Psoas muscle (tissue), 8 donors: ENCODE measurements at regions of chr1 and their contacts with region 1.

Region 1: DNA sequence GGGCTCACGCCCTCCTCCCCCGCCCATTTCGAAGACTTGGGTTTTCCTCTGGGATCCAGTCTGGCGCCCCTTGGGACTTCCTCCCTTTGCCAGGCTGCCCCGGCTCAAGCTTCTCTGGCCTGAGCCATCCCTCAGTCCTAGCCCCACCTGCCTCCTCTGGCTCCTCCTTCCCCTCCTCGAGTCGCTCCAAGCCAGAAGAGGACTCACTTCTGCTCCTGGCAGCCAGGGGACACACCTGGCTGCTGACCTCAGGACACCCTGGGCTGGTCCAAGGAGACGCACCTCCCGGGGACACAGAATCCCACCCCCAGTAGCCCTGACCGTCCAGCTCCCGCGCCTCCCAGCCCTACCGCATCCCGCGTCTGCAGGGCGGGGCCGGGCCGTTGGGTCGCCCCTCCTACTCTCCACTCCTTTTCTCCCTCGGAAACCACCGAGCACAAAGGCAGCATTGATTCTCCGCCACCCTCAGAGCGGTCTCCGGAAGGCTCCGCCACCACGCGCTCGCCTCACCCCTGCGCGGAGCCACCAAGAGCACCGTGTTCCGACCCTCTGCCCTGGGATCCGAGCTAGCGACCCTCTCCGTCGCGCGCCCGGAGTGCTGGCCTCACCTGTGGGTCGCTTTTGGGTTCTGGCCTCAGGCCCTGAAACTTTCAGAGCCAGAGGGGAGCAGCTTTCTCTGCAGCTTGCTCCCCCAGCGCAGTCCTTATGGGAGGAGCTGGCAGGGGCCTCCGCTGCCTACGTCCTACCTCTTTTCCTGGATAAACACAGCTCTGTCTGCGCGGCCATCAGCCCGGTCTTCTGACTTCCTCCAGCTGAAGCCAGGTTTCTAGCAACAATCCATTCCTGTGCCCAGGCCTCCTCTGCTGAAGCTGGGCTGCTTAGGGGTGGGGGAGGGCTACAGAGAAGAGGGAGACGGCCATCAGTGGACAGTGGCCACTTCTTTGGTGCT is at the start of gene C2CD4D:
- DNase-seq: no peak
- ATAC-seq: no peak
- H3K4me3 ChIP-seq: peak within 1 kb of the TSS; percentile 70
- H3K27ac ChIP-seq: no peak within 1 kb of the TSS
- H3K4me1 ChIP-seq: no peaks in the 10 kb centered on the region
- H3K27me3 ChIP-seq: peaks cover 0 to 28% (median 17%) of the 10 kb centered on the region in 3 donors
- CTCF ChIP-seq: no peak
- total RNA-seq, gene C2CD4D: 0.47 TPM in 1 of 4 donors, not detected in the others

Region 2: DNA sequence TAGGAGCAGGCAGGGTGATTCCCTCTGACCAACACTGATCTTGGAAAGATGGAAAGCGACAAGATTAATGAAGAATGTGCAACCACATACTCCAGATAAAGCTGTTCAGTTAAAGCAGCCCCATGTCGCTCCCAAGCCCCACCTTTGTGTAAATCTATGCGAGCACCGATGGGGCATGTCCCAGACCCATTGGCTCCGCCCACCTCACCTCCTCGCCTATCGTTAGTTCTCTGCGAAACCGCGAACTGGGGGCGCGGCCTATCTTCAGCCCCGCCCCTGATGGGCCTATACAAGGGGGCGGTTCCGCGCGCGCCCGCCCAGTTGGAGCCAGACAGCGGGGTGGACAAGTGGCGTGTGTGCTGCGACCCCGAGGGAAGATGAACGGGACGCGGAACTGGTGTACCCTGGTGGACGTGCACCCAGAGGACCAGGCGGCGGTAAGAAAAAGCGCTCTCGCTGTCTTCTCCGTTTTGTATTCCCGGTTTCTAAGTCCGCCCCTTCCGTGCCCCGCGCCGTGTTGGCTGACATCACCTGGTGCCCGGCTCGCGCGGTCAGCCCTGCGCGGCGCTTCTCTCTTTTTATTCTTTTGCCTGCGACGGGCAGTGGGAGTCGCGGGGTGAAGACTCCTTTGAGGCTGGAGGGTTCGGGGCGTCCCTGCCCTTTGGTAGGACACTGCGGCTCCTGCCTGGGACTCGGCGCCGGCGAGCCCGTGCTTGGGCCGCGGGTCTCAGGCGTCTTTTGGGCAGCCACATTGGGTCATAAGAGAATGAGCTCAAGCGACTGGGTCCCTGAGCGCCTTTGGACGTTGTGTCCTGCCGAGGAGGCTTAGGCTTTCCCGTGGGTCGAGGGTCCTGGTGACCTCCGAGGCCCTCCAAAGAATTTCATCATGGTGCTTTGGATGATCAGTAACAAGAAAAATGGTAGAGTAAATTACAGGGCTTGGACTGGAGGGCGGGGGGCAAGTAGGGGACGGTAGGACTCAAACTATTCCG is 299.4 kb before region 1 on chr1 and contains the start of gene TUFT1:
- intact Hi-C with region 1: loop called in 1 of 2 experiments (anchors 5 kb)
- DNase-seq: peak; percentile 91 to 95
- ATAC-seq: peak; percentile 92 to 97 (median 94)
- H3K4me3 ChIP-seq: peak within 1 kb of the TSS; percentile 90
- H3K27ac ChIP-seq: peak within 1 kb of the TSS; percentile 81
- H3K4me1 ChIP-seq: peaks cover 9% of the 10 kb centered on the region
- H3K27me3 ChIP-seq: no peaks in the 10 kb centered on the region
- CTCF ChIP-seq: no peak
- total RNA-seq, gene TUFT1: 0.97 to 5.3 (median 1.7) TPM

Region 3: DNA sequence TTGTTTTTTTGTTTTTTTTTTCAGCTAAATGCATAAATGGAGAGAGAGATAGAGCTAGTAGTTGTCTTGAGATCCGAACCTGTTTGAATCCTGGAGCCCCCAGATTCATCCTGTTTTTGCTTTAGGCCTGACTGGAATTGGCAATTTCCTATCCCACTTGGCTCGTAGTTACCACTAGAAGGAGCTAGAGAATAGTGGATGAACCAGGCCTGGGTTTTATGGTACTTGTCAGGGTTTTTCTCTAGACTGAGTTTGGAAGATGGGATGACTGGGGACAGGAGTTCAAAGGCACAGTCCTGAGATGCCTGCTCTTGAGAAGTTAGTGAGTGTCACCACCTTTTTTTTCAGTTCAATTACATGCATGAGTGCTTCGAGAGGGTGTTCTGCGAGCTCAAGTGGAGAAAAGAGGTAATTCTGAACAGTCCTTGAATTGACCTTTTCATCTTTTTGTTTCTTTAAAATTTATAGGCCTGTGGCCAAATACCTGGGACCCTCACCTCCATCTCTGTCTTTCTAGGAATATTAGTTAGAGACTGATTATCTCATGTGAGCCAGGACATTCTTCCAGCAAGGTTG is 146.6 kb before region 1 on chr1:
- intact Hi-C with region 1: loop called in 1 of 2 experiments (anchors 5 kb)
- DNase-seq: no peak
- ATAC-seq: no peak
- H3K4me3 ChIP-seq: no peak overlapping the region
- H3K27ac ChIP-seq: no peak overlapping the region
- H3K4me1 ChIP-seq: no peaks in the 10 kb centered on the region
- H3K27me3 ChIP-seq: no peaks in the 10 kb centered on the region
- CTCF ChIP-seq: peak; percentile 42

Region 4: GRCh38 chr1:151762941-151763921 is 76.5 kb before region 1 on chr1 and contains the start of gene MRPL9:
- intact Hi-C with region 1: loop called (anchors 5 to 10 kb)
- DNase-seq: peak; percentile 85 to 93
- ATAC-seq: peak; percentile 97 to 99 (median 98)
- H3K4me3 ChIP-seq: peak within 1 kb of the TSS; percentile 88
- H3K27ac ChIP-seq: peak within 1 kb of the TSS; percentile 89
- H3K4me1 ChIP-seq: peaks cover 14% of the 10 kb centered on the region
- H3K27me3 ChIP-seq: no peaks in the 10 kb centered on the region
- CTCF ChIP-seq: no peak
- total RNA-seq, gene MRPL9: 63.5 to 95.4 (median 71.3) TPM